Activated CD8-positive, alpha-beta memory T cell treated with anti-CD3 and anti-CD28 coated beads, Interleukin-2, amount 10 ng/mL, durations not matched to agents 7 days and 5 days (primary cell): ENCODE measurements at regions of chrX and their contacts with region 1.

Region 1: GRCh38 chrX:71181910-71182799 is 37.5 kb downstream of the NLGN3 start:
- DNase-seq: peak; percentile 93
- ATAC-seq: peak; percentile 96
- H3K4me3 Mint-ChIP-seq: peak overlapping the region; percentile 83
- H3K27ac Mint-ChIP-seq: peak overlapping the region; percentile 98
- H3K4me1 Mint-ChIP-seq: peaks cover 20% of the 10 kb centered on the region
- H3K27me3 Mint-ChIP-seq: no peaks in the 10 kb centered on the region

Region 2: DNA sequence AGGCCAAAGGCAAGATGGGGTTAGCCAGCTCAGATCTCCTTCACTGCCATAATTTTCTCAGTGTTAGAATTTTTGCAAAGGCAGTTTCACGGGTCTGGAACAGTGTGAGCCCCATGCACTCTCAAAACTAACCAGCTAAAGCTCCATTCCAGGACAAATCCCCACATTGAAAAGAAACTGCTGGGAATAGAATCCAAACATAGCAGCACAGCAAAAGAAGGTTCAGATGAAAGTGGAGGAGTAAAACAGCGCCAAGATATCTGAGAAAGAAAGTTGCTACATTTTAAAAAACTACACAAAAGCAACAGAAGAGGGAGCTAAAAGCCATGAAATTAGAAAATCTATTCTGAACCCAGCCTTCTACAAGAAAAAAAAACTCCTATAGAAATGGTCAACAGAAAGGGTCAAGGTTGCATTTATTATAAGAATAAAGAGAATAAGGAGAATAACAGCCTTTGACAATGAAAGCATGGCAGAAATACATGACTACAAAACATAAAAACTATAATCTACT is 211.6 kb before region 1 on chrX:
- CTCF ChIA-PET with region 1: interaction called, 18 read pairs
- DNase-seq: no peak
- ATAC-seq: peak; percentile 12
- H3K4me3 Mint-ChIP-seq: peak overlapping the region; percentile 40
- H3K27ac Mint-ChIP-seq: peak overlapping the region; percentile 62
- H3K4me1 Mint-ChIP-seq: peaks cover 6% of the 10 kb centered on the region
- H3K27me3 Mint-ChIP-seq: peaks cover 3% of the 10 kb centered on the region

Region 3: DNA sequence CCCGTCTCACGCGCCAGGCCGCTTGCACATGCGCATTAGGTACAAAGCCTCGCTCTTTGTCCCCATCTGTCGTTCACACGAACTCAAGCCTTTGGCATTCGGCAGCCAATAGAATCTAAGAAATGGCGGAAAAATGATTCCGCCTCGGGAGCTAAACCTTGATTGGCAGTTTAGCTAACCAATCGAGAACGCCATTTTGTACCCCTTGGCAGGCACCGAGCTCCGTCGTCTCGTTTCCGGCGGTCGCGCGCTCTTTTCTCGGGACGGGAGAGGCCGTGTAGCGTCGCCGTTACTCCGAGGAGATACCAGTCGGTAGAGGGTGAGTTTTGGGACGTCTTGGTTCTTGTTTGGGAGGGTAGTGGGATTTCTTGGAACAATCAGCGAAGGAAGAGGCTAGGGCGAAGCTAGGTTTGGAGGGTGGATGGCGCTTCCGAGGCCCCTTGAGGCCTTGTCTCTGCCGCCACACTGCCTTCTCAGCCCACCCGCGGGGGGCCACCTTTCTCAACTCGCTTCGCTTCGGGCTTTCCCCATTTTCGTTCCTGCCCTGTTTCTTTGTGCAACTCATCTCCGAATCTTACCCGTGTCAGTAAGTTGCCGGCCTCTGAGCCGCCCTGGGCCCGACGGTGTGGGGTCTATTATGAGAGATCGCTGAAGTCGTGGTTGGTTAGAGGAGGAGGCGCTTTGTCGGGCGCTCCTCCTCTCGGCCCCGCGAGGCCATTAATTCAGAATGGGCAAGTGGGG is 101.4 kb after region 1 on chrX and contains the start of gene NONO:
- CTCF ChIA-PET with region 1: interaction called, 10 read pairs
- DNase-seq: peak; percentile 93
- ATAC-seq: peak; percentile 84
- H3K4me3 Mint-ChIP-seq: peak within 1 kb of the TSS; percentile 86
- H3K27ac Mint-ChIP-seq: peak within 1 kb of the TSS; percentile 95
- H3K4me1 Mint-ChIP-seq: peaks cover 22% of the 10 kb centered on the region
- H3K27me3 Mint-ChIP-seq: no peaks in the 10 kb centered on the region
- total RNA-seq, gene NONO: 430 to 514 TPM